GM12878 (cell line): ENCODE measurements at regions of chr5 and their contacts with region 1.

Region 1: GRCh38 chr5:158812408-158812807 is 287.3 kb downstream of the EBF1 start:
- DNase-seq: peak; percentile 51
- ATAC-seq: peak; percentile 82
- H3K4me3 ChIP-seq: no peak overlapping the region
- H3K27ac ChIP-seq: peak overlapping the region; percentile 17; the same call in 1 of the 2 replicates
- H3K4me1 ChIP-seq: peaks cover 16% of the 10 kb centered on the region; the same call in 1 of the 2 replicates
- H3K27me3 ChIP-seq: no peaks in the 10 kb centered on the region
- CTCF ChIP-seq: no peak
- EP300 ChIP-seq: no peak
- POLR2A ChIP-seq: no peak
- RAD21 ChIP-seq: 0 out of 2 replicates have a peak, but pooled peaks have one; percentile 3

Region 2: DNA sequence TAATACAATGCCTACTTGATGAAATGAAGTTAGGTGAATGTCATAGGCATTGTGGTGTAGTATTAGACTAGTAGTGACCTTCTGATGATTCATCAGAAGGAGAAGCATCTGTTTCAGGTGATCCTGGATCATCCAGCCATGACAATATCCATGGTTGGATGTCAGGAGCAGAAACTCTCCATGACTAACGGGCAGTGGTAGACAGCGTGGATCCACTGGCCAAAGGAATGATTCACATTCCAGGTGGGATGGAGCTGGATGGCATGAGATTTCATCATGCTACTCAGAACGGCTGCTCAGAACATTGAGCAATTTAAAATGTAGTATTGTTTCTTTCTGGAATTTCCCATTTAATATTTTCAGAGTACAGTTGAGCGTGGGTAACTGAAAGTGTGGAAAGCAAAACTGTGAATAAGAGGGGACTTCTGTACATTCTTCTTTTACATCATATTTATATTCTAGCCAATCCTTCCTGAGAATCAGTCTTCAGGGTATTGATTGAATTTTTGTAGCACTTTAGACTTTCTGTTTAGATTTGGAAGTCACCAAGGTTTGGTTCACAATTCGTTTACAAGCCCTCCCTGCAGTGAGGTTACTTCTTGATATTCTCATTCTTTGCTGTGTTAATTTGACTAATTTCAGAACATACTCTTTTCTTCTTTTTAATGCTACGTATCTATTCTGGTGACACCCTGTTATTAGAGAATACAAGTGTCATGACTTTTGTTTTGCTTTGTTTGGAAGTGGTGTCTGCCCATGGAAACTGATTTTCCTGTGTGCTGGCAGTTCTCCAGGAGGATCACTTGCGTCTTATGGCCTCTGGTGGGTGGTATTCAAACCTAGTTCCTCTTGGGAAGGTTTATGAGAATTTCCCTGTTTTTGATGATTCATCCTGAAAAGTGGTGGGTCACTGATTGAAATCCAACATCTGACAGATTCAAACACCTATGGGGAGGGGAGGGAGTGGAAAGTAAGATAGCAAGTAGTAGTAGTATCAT is 941.3 kb before region 1 on chr5:
- CTCF ChIA-PET with region 1: no interaction called
- POLR2A ChIA-PET with region 1: no interaction called
- RAD21 ChIA-PET with region 1: no interaction called
- SMC1A ChIA-PET with region 1: no interaction called
- in situ Hi-C with region 1: no loop called
- intact Hi-C with region 1: no loop called
- DNase-seq: no peak
- ATAC-seq: peak; percentile 78
- H3K4me3 ChIP-seq: no peak overlapping the region
- H3K27ac ChIP-seq: no peak overlapping the region
- H3K4me1 ChIP-seq: peaks cover 15% of the 10 kb centered on the region
- H3K27me3 ChIP-seq: peaks cover 0 to 6% of the 10 kb centered on the region in 2 experiments; a peak in 2 of 4 replicates
- CTCF ChIP-seq: no peak
- EP300 ChIP-seq: peak; percentile 13 to 27; a peak in 2 of 4 replicates
- POLR2A ChIP-seq: no peak
- RAD21 ChIP-seq: no peak

Region 3: GRCh38 chr5:158634714-158635113 is 177.7 kb before region 1 on chr5:
- CTCF ChIA-PET with region 1: no interaction called
- POLR2A ChIA-PET with region 1: no interaction called
- RAD21 ChIA-PET with region 1: no interaction called
- SMC1A ChIA-PET with region 1: no interaction called
- in situ Hi-C with region 1: no loop called
- intact Hi-C with region 1: no loop called
- DNase-seq: no peak
- ATAC-seq: no peak
- H3K4me3 ChIP-seq: no peak overlapping the region
- H3K27ac ChIP-seq: no peak overlapping the region
- H3K4me1 ChIP-seq: no peaks in the 10 kb centered on the region
- H3K27me3 ChIP-seq: no peaks in the 10 kb centered on the region
- CTCF ChIP-seq: no peak
- EP300 ChIP-seq: no peak
- POLR2A ChIP-seq: no peak
- RAD21 ChIP-seq: no peak

Region 4: DNA sequence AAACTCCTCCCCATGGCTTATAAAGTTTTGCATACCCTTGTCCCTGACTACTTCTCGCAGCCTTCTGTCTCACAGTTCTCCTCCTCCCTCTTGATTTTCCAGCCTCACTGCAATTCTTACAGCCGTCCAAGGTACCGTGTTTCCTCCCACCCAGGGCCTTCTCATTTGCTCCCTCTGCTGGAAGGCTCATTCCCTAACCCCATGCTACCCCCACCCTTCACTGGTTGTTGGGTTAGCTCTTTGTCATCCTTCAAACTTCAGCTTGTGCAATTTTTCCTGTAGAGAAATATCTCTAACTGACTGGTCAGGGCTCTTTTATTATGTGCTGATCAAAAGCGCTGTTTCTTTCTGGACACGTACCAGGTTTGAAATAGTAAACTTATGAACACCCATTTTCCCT is 41.9 kb before region 1 on chr5:
- CTCF ChIA-PET with region 1: interaction called, 6 read pairs
- POLR2A ChIA-PET with region 1: interaction called, 31 read pairs
- RAD21 ChIA-PET with region 1: interaction called, 19 read pairs
- SMC1A ChIA-PET with region 1: interaction called, 11 read pairs
- in situ Hi-C with region 1: no loop called
- intact Hi-C with region 1: no loop called
- DNase-seq: no peak
- ATAC-seq: no peak
- H3K4me3 ChIP-seq: no peak overlapping the region
- H3K27ac ChIP-seq: no peak overlapping the region
- H3K4me1 ChIP-seq: peaks cover 4% of the 10 kb centered on the region; the same call in 1 of the 2 replicates
- H3K27me3 ChIP-seq: no peaks in the 10 kb centered on the region
- CTCF ChIP-seq: peak in 2 of 3 experiments; percentile 17 to 38; a peak in 2 of 6 replicates
- EP300 ChIP-seq: no peak
- POLR2A ChIP-seq: no peak
- RAD21 ChIP-seq: 0 out of 2 replicates have a peak, but pooled peaks have one; percentile 15

Region 5: DNA sequence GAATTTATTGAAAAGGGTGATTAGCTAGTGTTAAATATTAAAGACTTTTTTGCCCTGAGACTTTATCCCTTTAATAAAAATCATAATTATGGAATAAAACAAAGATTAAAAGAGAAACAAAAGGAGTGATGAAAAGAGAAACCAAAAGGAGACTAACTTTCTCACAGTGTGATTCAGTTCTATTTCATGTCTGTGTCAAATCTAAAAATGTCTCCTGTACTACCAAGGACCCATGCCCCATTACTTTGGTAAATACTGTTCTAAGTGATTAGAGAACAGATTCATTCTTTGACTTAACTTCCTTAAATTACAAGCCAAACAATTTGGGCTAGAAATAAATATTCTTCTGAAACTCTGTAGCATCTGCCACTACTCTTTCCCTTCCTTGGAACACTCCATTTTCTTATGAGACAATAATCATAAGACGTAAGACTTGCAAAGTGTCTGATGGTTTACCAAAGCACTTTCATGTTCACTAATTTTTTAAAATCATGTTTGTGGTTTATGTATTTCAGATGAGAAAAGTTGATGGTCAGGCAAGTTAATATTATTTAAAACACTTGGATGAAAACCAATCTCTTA is 31.7 kb before region 1 on chr5:
- CTCF ChIA-PET with region 1: interaction called, 6 read pairs
- POLR2A ChIA-PET with region 1: interaction called, 31 read pairs
- RAD21 ChIA-PET with region 1: interaction called, 19 read pairs
- SMC1A ChIA-PET with region 1: interaction called, 11 read pairs
- in situ Hi-C with region 1: no loop called
- intact Hi-C with region 1: no loop called
- DNase-seq: peak; percentile 28
- ATAC-seq: peak; percentile 85
- H3K4me3 ChIP-seq: no peak overlapping the region
- H3K27ac ChIP-seq: peak overlapping the region; percentile 46
- H3K4me1 ChIP-seq: peaks cover 18% of the 10 kb centered on the region
- H3K27me3 ChIP-seq: no peaks in the 10 kb centered on the region
- CTCF ChIP-seq: no peak
- EP300 ChIP-seq: no peak
- POLR2A ChIP-seq: no peak
- RAD21 ChIP-seq: no peak

Region 6: DNA sequence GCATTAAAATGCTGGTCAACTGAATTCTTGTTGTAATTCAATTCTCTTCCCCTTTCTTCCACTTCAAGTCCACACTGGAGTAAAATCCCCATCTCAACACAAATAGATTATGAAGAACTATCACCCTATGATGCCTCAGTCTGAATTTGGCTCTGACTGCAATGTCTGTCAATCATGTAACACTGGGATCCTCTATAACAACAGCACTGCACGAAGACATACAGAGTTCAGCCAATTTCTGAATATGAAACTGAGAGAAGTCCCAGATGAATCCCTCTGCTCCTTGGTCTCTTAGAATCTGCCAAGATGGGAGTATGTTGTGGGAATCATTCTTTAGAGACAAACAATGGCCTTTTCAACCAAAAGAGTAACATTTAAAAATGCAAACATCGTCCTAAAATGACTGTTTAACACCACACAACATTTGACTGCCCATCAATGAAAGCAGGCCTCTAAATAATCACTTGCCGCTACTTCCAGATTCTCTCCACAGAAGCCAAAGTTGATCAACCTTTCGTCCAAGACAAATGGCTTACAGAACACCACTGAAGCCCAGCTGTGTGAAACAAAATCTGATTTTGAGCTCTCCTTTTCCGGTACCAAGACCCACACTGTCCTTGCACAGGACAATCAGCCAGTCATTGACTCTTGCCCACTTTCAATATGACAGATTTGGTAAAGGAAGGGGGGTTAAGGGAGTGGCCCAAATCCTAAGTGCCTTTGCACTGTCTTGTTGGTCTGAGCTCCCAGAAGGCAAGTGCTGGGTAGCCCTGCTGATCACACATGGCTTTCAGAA is 29.3 kb after region 1 on chr5:
- CTCF ChIA-PET with region 1: no interaction called
- POLR2A ChIA-PET with region 1: interaction called, 6 read pairs
- RAD21 ChIA-PET with region 1: interaction called, 6 read pairs
- SMC1A ChIA-PET with region 1: interaction called, 33 read pairs
- in situ Hi-C with region 1: no loop called
- intact Hi-C with region 1: no loop called
- DNase-seq: peak; percentile 80
- ATAC-seq: peak; percentile 97
- H3K4me3 ChIP-seq: no peak overlapping the region
- H3K27ac ChIP-seq: peak overlapping the region; percentile 15
- H3K4me1 ChIP-seq: peaks cover 22% of the 10 kb centered on the region
- H3K27me3 ChIP-seq: no peaks in the 10 kb centered on the region
- CTCF ChIP-seq: no peak
- EP300 ChIP-seq: no peak
- POLR2A ChIP-seq: no peak
- RAD21 ChIP-seq: 0 out of 2 replicates have a peak, but pooled peaks have one; percentile 5

Region 7: GRCh38 chr5:158848634-158849033 is 36.2 kb after region 1 on chr5:
- CTCF ChIA-PET with region 1: interaction called, 5 read pairs
- POLR2A ChIA-PET with region 1: no interaction called
- RAD21 ChIA-PET with region 1: interaction called, 6 read pairs
- SMC1A ChIA-PET with region 1: interaction called, 33 read pairs
- in situ Hi-C with region 1: no loop called
- intact Hi-C with region 1: no loop called
- DNase-seq: peak; percentile 80
- ATAC-seq: peak; percentile 79
- H3K4me3 ChIP-seq: no peak overlapping the region
- H3K27ac ChIP-seq: peak overlapping the region; percentile 68
- H3K4me1 ChIP-seq: peaks cover 31% of the 10 kb centered on the region
- H3K27me3 ChIP-seq: no peaks in the 10 kb centered on the region
- CTCF ChIP-seq: no peak
- EP300 ChIP-seq: peak; percentile 16 to 30; a peak in 1 of 4 replicates
- POLR2A ChIP-seq: no peak
- RAD21 ChIP-seq: no peak